ENCODE measurements at regions of chr9 and their contacts with region 1.

Region 1: GRCh38 chr9:35096035-35096849 is at the start of gene PIGO:
- DNase-seq: peak; percentile 78 to 94 (median 89)
- ATAC-seq: peak; percentile 90
- H3K4me3 ChIP-seq: peak within 1 kb of the TSS; percentile 95 to 99
- H3K4me3 Mint-ChIP-seq: peak within 1 kb of the TSS; percentile 88
- H3K27ac ChIP-seq: peak within 1 kb of the TSS; percentile 95 to 100
- H3K27ac Mint-ChIP-seq: peak within 1 kb of the TSS; percentile 95
- H3K4me1 ChIP-seq: peaks cover 24% of the 10 kb centered on the region
- H3K4me1 Mint-ChIP-seq: peaks cover 32% of the 10 kb centered on the region
- H3K27me3 ChIP-seq: no peaks in the 10 kb centered on the region
- H3K27me3 Mint-ChIP-seq: no peaks in the 10 kb centered on the region
- CTCF ChIP-seq: peak; percentile 75
- total RNA-seq, gene PIGO: 15.1 to 16.4 TPM

Region 2: GRCh38 chr9:34646211-34647083 is 449.8 kb before region 1 on chr9 and contains the start of gene GALT:
- CTCF ChIA-PET with region 1: no interaction called
- POLR2A ChIA-PET with region 1: no interaction called
- intact Hi-C with region 1: no loop called
- DNase-seq: peak; percentile 90 to 98 (median 97)
- ATAC-seq: peak; percentile 90
- H3K4me3 ChIP-seq: peak within 1 kb of the TSS; percentile 89 to 99
- H3K4me3 Mint-ChIP-seq: peak within 1 kb of the TSS; percentile 95
- H3K27ac ChIP-seq: peak within 1 kb of the TSS; percentile 69 to 80
- H3K27ac Mint-ChIP-seq: peak within 1 kb of the TSS; percentile 89
- H3K4me1 ChIP-seq: peaks cover 27% of the 10 kb centered on the region
- H3K4me1 Mint-ChIP-seq: peaks cover 31% of the 10 kb centered on the region
- H3K27me3 ChIP-seq: no peaks in the 10 kb centered on the region
- H3K27me3 Mint-ChIP-seq: no peaks in the 10 kb centered on the region
- CTCF ChIP-seq: peak; percentile 58
- total RNA-seq, gene GALT: 64.7 to 68.4 TPM

Region 3: DNA sequence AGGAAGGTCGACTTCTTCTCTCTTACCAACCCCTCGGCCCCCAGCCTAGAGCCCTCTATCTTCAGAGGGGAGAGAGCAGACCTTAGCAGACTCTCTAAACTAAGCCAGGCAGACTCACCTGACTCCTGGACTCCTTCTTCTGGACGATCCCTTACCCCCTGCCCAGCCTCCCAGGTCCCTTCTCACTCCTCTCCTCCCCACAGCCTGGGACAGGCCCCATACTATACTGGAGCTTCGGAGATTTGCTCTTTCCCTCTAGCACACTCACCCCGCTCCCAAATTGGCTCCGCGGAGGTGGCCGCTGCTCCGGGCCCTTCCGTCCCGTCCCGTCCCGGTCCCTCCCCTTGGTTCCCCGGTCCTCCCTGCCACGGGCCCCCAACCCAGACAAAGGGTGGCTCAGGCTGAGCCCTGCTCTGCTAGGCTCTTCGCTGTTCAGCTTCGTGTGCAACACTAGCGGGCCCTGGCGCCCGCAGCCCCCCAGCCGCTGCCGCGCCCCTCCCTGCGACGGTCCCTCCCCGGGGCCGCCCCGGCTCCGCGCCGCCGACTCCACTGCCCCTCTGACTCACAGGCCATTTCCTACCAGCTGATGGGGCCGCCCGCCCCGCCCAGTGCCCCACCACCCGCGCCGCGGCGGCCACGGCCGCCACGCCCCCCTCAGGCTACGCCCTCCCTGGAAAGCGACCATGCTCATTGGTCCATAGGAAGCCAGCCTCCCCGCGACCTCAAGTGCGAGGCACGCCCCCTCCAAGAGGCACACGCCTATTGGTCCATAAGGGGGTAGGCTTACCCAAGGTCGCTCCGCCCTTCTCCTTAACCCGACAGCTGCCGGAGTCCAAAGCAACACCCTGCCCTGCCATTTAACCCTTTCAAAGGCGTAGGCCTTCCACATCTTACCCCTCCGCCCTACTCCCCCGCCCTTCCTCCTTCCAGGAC is 15.0 kb after region 1 on chr9:
- CTCF ChIA-PET with region 1: interaction called, 19 read pairs
- POLR2A ChIA-PET with region 1: interaction called, 4 read pairs
- intact Hi-C with region 1: loop called (anchors 1 kb)
- DNase-seq: peak; percentile 88 to 98 (median 96)
- ATAC-seq: peak; percentile 78
- H3K4me3 ChIP-seq: peak overlapping the region; percentile 64 to 73
- H3K4me3 Mint-ChIP-seq: peak overlapping the region; percentile 82
- H3K27ac ChIP-seq: peak overlapping the region; percentile 39 to 79
- H3K27ac Mint-ChIP-seq: peak overlapping the region; percentile 85
- H3K4me1 ChIP-seq: peaks cover 45% of the 10 kb centered on the region
- H3K4me1 Mint-ChIP-seq: peaks cover 53% of the 10 kb centered on the region
- H3K27me3 ChIP-seq: no peaks in the 10 kb centered on the region
- H3K27me3 Mint-ChIP-seq: no peaks in the 10 kb centered on the region
- CTCF ChIP-seq: no peak

Measured in CD8-positive, alpha-beta T cell (primary cell).